ENCODE measurements at regions of chr18 and their contacts with region 1.

Region 1: DNA sequence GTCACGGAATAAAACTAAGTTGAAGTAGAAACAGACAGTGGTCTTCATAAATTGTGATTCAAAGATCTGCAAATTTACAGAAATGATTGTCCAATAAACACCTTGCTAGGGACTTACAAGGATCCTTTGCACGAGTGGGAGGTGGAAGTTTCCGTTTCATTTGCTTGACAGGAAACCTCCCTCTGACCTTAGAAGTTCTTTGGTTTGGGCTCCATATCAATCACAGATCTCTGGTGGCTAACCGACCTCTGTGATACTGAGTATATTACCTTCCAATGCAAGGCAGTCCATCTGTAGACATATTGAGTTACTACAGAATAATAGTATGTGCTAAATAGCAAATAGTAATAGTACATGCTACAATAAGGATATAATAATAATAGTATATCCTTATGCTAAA is 33.7 kb upstream of the RNF152 start:
- DNase-seq: no peak
- ATAC-seq: no peak
- H3K4me3 ChIP-seq: no peak overlapping the region
- H3K27ac ChIP-seq: no peak overlapping the region
- H3K4me1 ChIP-seq: no peaks in the 10 kb centered on the region
- H3K27me3 ChIP-seq: no peaks in the 10 kb centered on the region
- CTCF ChIP-seq: no peak
- POLR2A ChIP-seq: no peak

Region 2: GRCh38 chr18:61980355-61980754 is 53.8 kb after region 1 on chr18:
- intact Hi-C with region 1: loop called (anchors 10 kb)
- DNase-seq: no peak
- ATAC-seq: no peak
- H3K4me3 ChIP-seq: no peak overlapping the region
- H3K27ac ChIP-seq: no peak overlapping the region
- H3K4me1 ChIP-seq: no peaks in the 10 kb centered on the region
- H3K27me3 ChIP-seq: no peaks in the 10 kb centered on the region
- CTCF ChIP-seq: no peak
- POLR2A ChIP-seq: no peak

Measured in body of pancreas (tissue), 4 donors.